SK-N-SH (cell line): ENCODE measurements at regions of chr4 and their contacts with region 1.

Region 1: GRCh38 chr4:75724066-75724866 is at the start of gene USO1:
- DNase-seq: peak; percentile 95
- H3K4me3 ChIP-seq: peak within 1 kb of the TSS; percentile 71 to 94
- H3K27ac ChIP-seq: peak within 1 kb of the TSS; percentile 94 to 97
- H3K4me1 ChIP-seq: peaks cover 13 to 23% of the 10 kb centered on the region in 2 experiments; a peak in 3 of 4 replicates
- H3K27me3 ChIP-seq: no peaks in the 10 kb centered on the region
- CTCF ChIP-seq: peak; percentile 93
- EP300 ChIP-seq: no peak
- RAD21 ChIP-seq: peak; percentile 69
- polyA plus RNA-seq, gene USO1: 25.6 and 38.8 TPM in 2 replicates

Region 2: DNA sequence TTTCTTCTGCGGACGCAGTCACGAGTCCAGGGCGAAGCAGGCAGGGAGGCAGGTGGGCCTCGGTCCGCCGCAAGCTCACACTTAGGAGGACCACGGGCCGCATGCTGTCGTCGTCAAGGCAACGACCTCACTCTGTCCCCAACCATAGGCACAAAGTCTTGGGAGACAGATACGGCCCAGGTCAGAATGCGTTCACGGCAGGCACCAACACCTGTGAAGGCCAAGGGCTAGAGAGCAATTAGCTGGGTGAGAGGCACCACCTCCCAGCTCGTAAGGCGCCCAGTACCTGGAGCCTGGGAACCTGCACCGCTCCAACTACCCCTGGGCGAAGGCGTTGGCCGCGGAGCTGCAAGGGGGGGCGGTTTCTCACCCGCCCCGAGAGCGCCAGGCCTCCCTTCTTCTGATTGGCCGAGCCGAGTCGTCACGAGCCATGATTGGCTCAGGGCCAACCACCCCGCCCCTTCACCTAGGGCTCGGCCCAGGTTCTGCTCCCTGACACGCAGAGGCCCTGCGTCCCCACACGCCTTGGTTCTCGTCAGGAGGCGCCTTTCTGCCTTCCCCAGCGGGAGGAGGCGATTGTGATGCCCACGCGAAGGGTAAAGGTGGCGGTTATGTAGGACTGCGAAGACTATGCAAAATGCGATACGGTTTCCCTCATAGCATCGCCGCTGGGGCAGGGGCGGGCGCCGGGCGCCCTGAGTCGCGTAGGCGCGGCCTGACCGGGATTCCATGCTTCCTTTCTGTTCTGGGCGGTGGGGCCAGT is 93.9 kb before region 1 on chr4 and contains the start of gene CDKL2:
- CTCF ChIA-PET with region 1: interaction called, 10 read pairs
- POLR2A ChIA-PET with region 1: no interaction called
- DNase-seq: peak; percentile 96
- H3K4me3 ChIP-seq: peak within 1 kb of the TSS; percentile 80 to 83
- H3K27ac ChIP-seq: peak within 1 kb of the TSS in 1 of 2 experiments; percentile 54; a peak in 1 of 4 replicates
- H3K4me1 ChIP-seq: peaks cover 0 to 5% of the 10 kb centered on the region in 2 experiments; a peak in 1 of 4 replicates
- H3K27me3 ChIP-seq: no peaks in the 10 kb centered on the region
- CTCF ChIP-seq: no peak; the same call in 1 of the 2 replicates
- EP300 ChIP-seq: no peak
- RAD21 ChIP-seq: no peak
- polyA plus RNA-seq, gene CDKL2: 0.41 and 0.58 TPM in 2 replicates

Region 3: DNA sequence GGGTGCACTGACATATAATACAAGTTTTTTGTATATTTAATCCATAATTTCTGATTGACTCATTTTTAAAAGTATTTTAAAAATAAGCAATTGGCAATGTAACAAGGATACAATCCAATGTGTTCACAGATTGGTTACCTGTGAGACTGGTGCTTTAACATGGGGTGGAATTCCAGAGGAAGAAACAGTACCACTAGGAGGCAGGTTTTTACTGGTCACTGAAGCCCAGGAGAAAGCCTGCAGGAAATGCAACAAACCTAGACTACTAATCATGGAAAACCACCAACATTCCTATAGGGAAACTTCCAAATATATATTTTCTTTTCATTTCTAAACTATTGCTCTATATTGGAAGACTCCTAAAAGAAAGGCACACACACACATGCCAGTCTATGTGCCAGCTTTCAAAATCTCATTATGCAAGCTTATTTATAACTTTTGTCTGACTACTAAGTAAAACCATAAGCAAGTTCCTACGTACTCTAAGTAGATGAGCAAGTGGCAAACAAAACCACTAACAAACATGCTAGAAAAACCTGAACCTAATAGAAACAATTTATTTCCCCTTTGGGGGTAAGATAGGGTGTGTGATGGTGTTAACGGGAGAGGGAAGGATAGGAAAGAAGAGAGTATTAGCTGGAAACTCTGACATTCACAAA is 70.3 kb before region 1 on chr4:
- CTCF ChIA-PET with region 1: interaction called, 23 read pairs
- POLR2A ChIA-PET with region 1: no interaction called
- DNase-seq: peak; percentile 39
- H3K4me3 ChIP-seq: no peak overlapping the region
- H3K27ac ChIP-seq: no peak overlapping the region
- H3K4me1 ChIP-seq: no peaks in the 10 kb centered on the region; a peak in 1 of 4 replicates
- H3K27me3 ChIP-seq: no peaks in the 10 kb centered on the region
- CTCF ChIP-seq: peak; percentile 68
- EP300 ChIP-seq: no peak
- RAD21 ChIP-seq: peak; percentile 68

Region 4: DNA sequence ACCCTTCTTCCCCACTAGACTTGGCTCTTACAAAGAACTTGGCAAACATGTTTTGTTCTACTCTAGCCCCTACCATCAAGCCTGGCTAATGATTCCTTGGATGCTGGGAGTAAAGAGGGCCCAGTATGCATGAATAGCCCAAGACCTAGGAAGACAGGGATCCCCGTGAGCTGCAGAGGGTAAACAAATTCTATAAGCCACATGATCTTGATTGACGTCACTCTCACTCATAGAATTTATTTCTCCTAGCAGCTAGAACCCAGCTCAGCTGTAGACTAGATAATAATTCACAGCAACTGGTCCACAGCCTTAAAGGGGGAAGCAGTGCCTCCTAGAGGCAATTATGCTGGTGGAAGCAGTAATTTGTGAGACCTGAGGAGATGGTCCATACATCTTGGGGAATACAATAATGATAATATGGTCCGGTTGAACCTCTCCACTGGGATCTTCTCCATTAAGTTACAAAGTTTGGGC is 16.0 kb before region 1 on chr4:
- CTCF ChIA-PET with region 1: interaction called, 17 read pairs
- POLR2A ChIA-PET with region 1: interaction called, 4 read pairs
- DNase-seq: no peak
- H3K4me3 ChIP-seq: no peak overlapping the region
- H3K27ac ChIP-seq: no peak overlapping the region
- H3K4me1 ChIP-seq: peaks cover 0 to 5% of the 10 kb centered on the region in 2 experiments; a peak in 1 of 4 replicates
- H3K27me3 ChIP-seq: no peaks in the 10 kb centered on the region
- CTCF ChIP-seq: peak; percentile 48
- EP300 ChIP-seq: no peak
- RAD21 ChIP-seq: peak; percentile 43

Region 5: GRCh38 chr4:75745721-75746199 is 21.5 kb after region 1 on chr4:
- CTCF ChIA-PET with region 1: interaction called, 10 read pairs
- POLR2A ChIA-PET with region 1: no interaction called
- DNase-seq: no peak
- H3K4me3 ChIP-seq: no peak overlapping the region
- H3K27ac ChIP-seq: no peak overlapping the region; a peak in 1 of 4 replicates
- H3K4me1 ChIP-seq: no peaks in the 10 kb centered on the region
- H3K27me3 ChIP-seq: no peaks in the 10 kb centered on the region
- CTCF ChIP-seq: no peak
- EP300 ChIP-seq: no peak
- RAD21 ChIP-seq: no peak